Activated T-helper 2 cell treated with anti-CD3 and anti-CD28 coated beads, Interferon-gamma antibody, Interleukin-2, Interleukin-4, amounts not matched to agents 10 μg/mL and 5 μg/mL and 100 μg/mL, durations not matched to agents 14 hours and 24 hours and 36 hours (primary cell): ENCODE measurements at regions of chr12 and their contacts with region 1.

Region 1: DNA sequence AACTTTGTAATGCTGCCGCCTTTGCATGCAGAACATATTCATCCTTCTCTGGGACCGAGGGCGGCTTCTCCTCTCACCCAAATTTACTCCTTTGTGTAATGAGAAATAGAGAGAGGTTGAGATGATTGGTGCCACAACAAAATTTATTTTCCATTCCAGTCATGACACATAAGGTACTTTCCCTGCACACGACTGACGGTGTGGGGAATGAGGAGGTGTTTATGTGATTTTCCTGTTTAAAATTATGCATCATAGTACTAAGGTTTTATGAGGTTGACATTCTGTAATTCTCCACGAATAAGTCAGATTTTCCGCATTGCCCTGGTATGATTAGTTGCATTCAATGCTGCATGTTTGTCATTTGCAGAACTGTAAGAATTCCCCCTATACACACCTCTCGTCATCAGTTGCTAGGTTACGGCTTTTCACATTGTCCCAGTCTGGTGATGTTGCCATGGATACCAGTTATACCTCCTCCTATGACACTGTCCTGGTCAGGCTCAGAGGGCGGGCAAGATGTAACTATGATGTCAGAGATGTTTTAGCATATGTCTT is 23.1 kb downstream of the BICDL1 start:
- DNase-seq: peak; percentile 76
- H3K4me3 Mint-ChIP-seq: peak overlapping the region; percentile 75
- H3K27ac Mint-ChIP-seq: peak overlapping the region; percentile 96
- H3K4me1 Mint-ChIP-seq: peaks cover 74% of the 10 kb centered on the region
- H3K27me3 Mint-ChIP-seq: no peaks in the 10 kb centered on the region

Region 2: GRCh38 chr12:119902084-119902509 is 110.0 kb before region 1 on chr12:
- intact Hi-C with region 1: no loop called
- DNase-seq: peak; percentile 72
- H3K4me3 Mint-ChIP-seq: no peak overlapping the region
- H3K27ac Mint-ChIP-seq: no peak overlapping the region
- H3K4me1 Mint-ChIP-seq: peaks cover 7% of the 10 kb centered on the region
- H3K27me3 Mint-ChIP-seq: no peaks in the 10 kb centered on the region

Region 3: DNA sequence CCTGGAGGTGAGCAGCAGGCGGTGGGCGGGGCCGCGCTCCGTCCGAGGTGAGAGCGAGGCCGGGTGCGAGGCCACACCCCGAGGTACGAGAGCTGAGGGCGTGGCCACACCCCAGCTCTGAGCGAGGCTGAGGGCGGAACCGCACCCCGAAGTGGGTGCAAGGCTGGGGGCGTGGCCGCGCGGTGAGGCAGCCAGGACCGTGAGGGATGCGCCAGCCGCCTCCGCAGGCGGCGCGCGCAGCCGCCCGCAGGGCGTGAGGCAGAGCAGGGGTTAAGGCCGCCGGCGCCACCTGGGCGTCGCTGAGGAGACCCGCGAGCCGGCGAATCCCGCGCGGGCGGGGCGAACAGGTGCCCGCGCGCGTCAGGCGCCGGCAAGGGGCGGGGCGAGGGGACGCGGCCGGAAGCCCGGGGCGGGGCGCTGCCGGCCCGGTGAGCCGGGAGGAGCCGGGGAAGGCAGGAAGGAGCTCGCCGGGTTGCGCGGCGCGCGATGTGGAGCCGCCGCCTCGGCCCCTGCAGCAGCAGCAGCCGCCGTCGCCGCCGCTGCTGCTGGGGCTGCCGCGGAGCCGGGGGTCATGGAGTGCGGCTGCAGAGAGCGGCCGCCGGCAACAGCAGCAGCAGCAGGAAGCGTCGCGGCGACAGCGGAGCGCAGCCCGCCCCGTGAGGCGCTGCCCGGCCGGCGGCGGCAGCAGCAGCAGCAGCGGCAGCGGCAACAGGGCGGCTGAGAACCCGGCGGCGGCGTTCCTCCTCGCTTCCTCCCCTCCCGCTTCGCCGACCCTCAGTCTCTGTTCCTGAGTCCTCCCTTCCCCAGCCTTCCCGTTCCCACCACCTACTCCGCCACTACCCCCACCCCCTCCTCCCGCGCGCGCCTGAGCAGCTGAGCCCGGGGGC is 23.1 kb before region 1 on chr12 and contains the start of gene BICDL1:
- intact Hi-C with region 1: loop called (anchors 1 kb)
- DNase-seq: peak; percentile 97
- H3K4me3 Mint-ChIP-seq: peak within 1 kb of the TSS; percentile 94
- H3K27ac Mint-ChIP-seq: peak within 1 kb of the TSS; percentile 91
- H3K4me1 Mint-ChIP-seq: peaks cover 44% of the 10 kb centered on the region
- H3K27me3 Mint-ChIP-seq: peaks cover 1% of the 10 kb centered on the region
- total RNA-seq, gene BICDL1: 127 and 130 TPM in 2 replicates

Region 4: DNA sequence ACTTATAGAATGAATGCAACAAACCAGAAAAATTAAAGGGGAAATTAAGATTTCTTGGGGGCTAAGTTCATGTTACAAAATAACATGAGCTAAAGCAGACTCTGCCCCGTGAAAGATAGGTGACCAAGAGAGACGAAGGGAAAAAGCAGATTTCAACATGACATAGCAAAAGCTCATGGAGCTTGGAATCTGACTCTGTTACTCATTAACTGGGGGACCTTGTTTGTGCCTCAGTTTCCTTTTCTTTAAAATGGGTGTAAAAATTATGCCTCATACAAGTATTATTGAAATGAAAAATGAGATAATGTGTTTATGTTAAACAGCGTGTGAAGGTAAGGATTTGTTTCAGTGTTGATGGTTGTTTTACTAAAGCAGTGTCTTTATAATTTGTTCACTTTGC is 11.6 kb before region 1 on chr12:
- intact Hi-C with region 1: no loop called
- DNase-seq: no peak
- H3K4me3 Mint-ChIP-seq: no peak overlapping the region
- H3K27ac Mint-ChIP-seq: no peak overlapping the region
- H3K4me1 Mint-ChIP-seq: peaks cover 28% of the 10 kb centered on the region
- H3K27me3 Mint-ChIP-seq: no peaks in the 10 kb centered on the region

Region 5: GRCh38 chr12:120086801-120087621 is 74.9 kb after region 1 on chr12:
- intact Hi-C with region 1: loop called (anchors 1 kb)
- DNase-seq: peak; percentile 100
- H3K4me3 Mint-ChIP-seq: peak overlapping the region; percentile 74
- H3K27ac Mint-ChIP-seq: peak overlapping the region; percentile 88
- H3K4me1 Mint-ChIP-seq: peaks cover 28% of the 10 kb centered on the region
- H3K27me3 Mint-ChIP-seq: no peaks in the 10 kb centered on the region

Region 6: DNA sequence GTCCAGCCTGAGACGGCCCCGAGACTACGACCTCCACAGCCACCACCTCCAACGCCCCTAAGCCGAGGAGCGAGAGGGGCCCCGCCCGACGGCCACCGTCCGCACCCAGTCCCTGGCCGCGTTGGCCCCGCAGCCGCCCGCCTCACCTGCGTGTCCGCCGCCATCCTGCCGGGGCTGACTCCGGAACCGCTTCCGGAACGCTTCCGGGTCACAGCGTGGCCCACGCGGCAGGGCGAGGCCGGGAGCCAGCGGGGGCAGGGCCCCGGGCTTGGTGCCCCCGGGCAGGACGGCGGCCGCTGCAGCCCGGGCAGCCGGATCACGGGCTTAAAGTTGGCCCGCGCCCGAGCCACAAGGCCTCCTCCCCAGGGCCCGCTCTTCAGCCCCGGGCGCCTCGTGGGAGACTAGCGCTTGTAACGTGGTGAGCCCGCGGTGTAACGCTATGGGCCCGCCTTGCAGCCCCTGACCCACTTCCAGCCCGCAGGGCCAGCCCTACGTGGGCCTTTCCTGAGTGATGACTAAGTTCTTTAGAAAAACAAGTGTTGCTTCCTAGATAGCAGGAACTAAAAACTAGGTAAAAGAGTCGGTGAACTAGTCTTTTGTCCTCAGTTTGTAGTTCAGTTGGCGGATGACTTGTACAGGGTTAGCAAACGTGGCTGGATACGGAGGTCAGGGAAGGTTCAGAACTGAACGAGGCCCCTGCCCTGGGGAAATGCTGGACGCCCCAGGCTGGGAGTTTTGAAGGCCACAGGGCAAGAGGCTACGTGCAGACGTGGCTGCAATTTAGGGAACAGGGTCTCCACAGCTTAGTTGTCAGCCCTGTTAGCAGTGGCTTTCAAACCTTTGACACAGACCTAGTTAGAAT is 182.6 kb after region 1 on chr12 and contains the start of gene GCN1:
- intact Hi-C with region 1: loop called (anchors 1 kb)
- DNase-seq: peak; percentile 84
- H3K4me3 Mint-ChIP-seq: peak within 1 kb of the TSS; percentile 92
- H3K27ac Mint-ChIP-seq: peak within 1 kb of the TSS; percentile 98
- H3K4me1 Mint-ChIP-seq: peaks cover 39% of the 10 kb centered on the region
- H3K27me3 Mint-ChIP-seq: no peaks in the 10 kb centered on the region
- total RNA-seq, gene GCN1: 165 and 176 TPM in 2 replicates